A549 (cell line): ENCODE measurements at regions of chr5 and their contacts with region 1.

Region 1: GRCh38 chr5:149035372-149035790 is 27.5 kb downstream of the SH3TC2 start:
- DNase-seq: peak; percentile 57 to 79
- ATAC-seq: peak; percentile 95 to 99
- H3K4me3 ChIP-seq: no peak overlapping the region
- H3K27ac ChIP-seq: no peak overlapping the region
- H3K4me1 ChIP-seq: peaks cover 7% of the 10 kb centered on the region; the same call in 1 of the 3 replicates
- CTCF ChIP-seq: peak; percentile 93
- EP300 ChIP-seq: no peak
- POLR2A ChIP-seq: no peak
- RAD21 ChIP-seq: peak; percentile 92 to 95

Region 2: DNA sequence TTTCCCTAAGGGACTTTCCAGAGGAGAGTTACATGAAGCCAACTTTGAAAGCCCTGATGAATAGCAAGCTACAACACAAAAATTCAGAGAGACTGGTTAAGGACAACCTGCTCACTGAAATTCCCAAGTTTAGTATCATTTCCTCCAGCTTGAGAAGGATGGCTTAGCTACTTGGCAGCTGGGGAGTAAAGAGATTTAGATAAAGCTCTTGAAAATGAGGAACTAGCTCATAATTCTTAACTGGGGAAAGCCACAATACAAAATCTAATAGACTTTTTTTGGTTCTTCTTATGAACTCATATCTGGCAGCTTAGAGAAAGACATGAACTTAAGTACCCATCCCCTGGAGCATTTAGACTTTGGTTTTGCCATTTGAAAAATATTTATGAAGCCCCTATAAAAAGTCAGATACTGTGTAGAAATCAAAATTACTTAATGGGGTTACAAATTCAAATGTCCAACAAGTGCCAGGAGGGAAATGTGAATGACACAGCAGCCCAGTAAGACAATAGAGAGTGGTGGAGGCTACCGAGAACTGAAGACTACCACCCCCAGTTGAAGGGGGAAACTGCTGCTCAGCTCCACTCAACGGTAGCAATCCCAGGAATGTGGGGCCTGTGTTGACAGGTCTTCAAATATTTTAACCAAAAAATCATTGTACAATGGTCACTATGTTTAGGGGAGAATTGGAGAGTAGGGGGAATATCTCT is 288.4 kb before region 1 on chr5:
- CTCF ChIA-PET with region 1: interaction called, 432 read pairs
- POLR2A ChIA-PET with region 1: no interaction called
- DNase-seq: no peak
- ATAC-seq: no peak
- H3K4me3 ChIP-seq: no peak overlapping the region
- H3K27ac ChIP-seq: no peak overlapping the region
- H3K4me1 ChIP-seq: no peaks in the 10 kb centered on the region
- CTCF ChIP-seq: no peak
- EP300 ChIP-seq: no peak
- POLR2A ChIP-seq: no peak
- RAD21 ChIP-seq: no peak

Region 3: DNA sequence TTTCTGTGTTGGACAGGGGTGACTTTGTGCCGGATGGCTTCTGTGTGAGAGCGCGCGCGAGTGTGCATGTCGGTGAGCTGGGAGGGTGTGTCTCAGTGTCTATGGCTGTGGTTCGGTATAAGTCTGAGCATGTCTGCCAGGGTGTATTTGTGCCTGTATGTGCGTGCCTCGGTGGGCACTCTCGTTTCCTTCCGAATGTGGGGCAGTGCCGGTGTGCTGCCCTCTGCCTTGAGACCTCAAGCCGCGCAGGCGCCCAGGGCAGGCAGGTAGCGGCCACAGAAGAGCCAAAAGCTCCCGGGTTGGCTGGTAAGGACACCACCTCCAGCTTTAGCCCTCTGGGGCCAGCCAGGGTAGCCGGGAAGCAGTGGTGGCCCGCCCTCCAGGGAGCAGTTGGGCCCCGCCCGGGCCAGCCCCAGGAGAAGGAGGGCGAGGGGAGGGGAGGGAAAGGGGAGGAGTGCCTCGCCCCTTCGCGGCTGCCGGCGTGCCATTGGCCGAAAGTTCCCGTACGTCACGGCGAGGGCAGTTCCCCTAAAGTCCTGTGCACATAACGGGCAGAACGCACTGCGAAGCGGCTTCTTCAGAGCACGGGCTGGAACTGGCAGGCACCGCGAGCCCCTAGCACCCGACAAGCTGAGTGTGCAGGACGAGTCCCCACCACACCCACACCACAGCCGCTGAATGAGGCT is 209.2 kb before region 1 on chr5 and contains the start of gene ADRB2:
- CTCF ChIA-PET with region 1: interaction called, 22 read pairs
- POLR2A ChIA-PET with region 1: no interaction called
- DNase-seq: peak; percentile 84 to 90
- ATAC-seq: peak; percentile 95 to 98
- H3K4me3 ChIP-seq: peak within 1 kb of the TSS; percentile 48
- H3K27ac ChIP-seq: peak within 1 kb of the TSS; percentile 44 to 78
- H3K4me1 ChIP-seq: 0 out of 3 replicates have a peak, but pooled peaks cover 4% of the 10 kb centered on the region
- CTCF ChIP-seq: no peak
- EP300 ChIP-seq: no peak
- POLR2A ChIP-seq: peak; percentile 84
- RAD21 ChIP-seq: no peak
- polyA plus RNA-seq, gene ADRB2: 0.15 and 0.18 TPM in 2 replicates

Region 4: GRCh38 chr5:148979104-148979723 is 56.2 kb before region 1 on chr5:
- CTCF ChIA-PET with region 1: interaction called, 18 read pairs
- POLR2A ChIA-PET with region 1: no interaction called
- DNase-seq: no peak
- ATAC-seq: peak; percentile 45 to 54; a peak in 4 of 6 replicates
- H3K4me3 ChIP-seq: no peak overlapping the region
- H3K27ac ChIP-seq: peak overlapping the region; percentile 34 to 56; a peak in 2 of 6 replicates
- H3K4me1 ChIP-seq: peaks cover 16% of the 10 kb centered on the region
- CTCF ChIP-seq: no peak
- EP300 ChIP-seq: no peak
- POLR2A ChIP-seq: no peak
- RAD21 ChIP-seq: no peak

Region 5: DNA sequence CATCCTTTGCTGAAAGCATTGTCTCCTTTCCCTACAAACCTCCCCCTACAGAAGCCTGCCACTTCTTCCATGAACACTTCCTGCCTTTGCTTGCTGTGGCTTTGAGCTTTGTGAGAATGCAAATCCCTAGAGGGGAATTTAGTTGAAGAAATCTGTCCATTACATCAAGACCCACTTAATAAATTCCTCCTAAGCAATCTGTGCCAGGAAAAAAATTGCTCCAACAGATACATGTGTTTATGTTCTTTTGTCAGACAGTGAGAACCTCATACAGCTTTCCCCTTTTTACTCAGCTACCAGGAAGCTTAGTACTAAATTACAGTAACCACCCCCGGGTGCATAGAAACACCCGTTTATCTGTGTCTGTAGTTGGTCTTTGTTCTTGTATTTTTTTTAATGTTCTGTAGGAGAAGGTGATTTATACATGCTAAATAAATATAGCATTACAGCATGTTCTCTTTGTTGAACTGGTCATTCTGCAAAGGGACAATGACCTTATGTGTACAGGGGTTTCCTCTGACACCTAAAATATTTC is 16.4 kb before region 1 on chr5:
- CTCF ChIA-PET with region 1: interaction called, 68 read pairs
- POLR2A ChIA-PET with region 1: no interaction called
- DNase-seq: no peak
- ATAC-seq: no peak
- H3K4me3 ChIP-seq: no peak overlapping the region
- H3K27ac ChIP-seq: no peak overlapping the region
- H3K4me1 ChIP-seq: no peaks in the 10 kb centered on the region
- CTCF ChIP-seq: no peak
- EP300 ChIP-seq: no peak
- POLR2A ChIP-seq: no peak
- RAD21 ChIP-seq: no peak

Region 6: DNA sequence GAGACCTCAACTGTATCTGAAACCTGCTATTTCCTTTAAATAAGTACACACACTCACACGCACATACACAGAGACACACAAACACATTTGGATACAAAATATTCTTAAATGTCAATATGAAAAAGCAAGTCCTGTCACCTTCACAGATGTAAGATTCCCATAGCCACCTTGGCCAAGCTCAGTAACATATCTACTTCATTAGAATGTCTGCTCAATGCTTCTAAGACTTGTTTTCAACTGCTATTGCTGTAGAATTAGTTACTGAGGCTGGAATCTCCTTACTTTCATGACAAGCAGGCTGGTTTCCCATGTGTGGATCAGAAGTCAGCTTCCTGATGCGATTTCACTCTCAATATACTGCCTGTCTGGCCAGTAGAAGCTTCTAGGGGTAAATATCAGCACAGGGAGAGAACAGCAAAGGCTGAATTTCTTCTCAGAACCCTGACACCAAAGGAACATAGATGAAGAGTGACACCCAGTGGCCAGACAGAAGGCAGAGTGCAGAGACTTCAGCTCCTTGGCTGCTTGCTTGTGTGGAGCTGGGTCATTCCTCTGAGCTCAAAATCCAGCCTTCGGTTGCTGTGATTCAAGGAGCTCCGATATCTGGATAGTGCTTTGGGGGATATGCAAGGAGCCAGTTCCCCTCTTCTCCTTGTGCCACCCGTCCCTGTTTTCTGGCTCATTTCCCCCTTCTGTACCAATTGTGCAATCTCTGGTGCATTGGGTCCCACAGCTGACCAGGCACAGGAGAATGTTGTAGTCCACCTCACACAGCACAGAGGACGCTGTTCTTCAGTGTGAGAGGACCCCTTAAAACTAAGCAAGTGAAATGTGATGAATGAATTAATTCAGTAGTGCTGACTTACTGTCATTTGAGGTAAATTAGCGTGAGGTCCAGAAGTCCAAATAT is 79.3 kb after region 1 on chr5:
- CTCF ChIA-PET with region 1: interaction called, 40 read pairs
- POLR2A ChIA-PET with region 1: no interaction called
- DNase-seq: peak; percentile 33 to 75
- ATAC-seq: peak; percentile 99 to 100
- H3K4me3 ChIP-seq: no peak overlapping the region
- H3K27ac ChIP-seq: 0 out of 6 replicates have a peak overlapping the region, but pooled peaks have one; percentile 11 to 35
- H3K4me1 ChIP-seq: peaks cover 9% of the 10 kb centered on the region; the same call in 2 of the 3 replicates
- CTCF ChIP-seq: peak; percentile 78
- EP300 ChIP-seq: no peak
- POLR2A ChIP-seq: no peak
- RAD21 ChIP-seq: peak; percentile 86 to 90

Region 7: GRCh38 chr5:149141224-149141956 is 106.0 kb after region 1 on chr5 and contains the start of gene ABLIM3:
- CTCF ChIA-PET with region 1: no interaction called
- POLR2A ChIA-PET with region 1: no interaction called
- DNase-seq: peak; percentile 74 to 88
- ATAC-seq: peak; percentile 92 to 96
- H3K4me3 ChIP-seq: peak within 1 kb of the TSS; percentile 65
- H3K27ac ChIP-seq: peak within 1 kb of the TSS; percentile 69 to 83
- H3K4me1 ChIP-seq: peaks cover 12% of the 10 kb centered on the region; the same call in 1 of the 3 replicates
- CTCF ChIP-seq: peak; percentile 92
- EP300 ChIP-seq: no peak
- POLR2A ChIP-seq: no peak
- RAD21 ChIP-seq: peak; percentile 50 to 77; a peak in 4 of 5 replicates
- polyA plus RNA-seq, gene ABLIM3: 2.7 and 3.5 TPM in 2 replicates